ENCODE measurements at regions of chr10 and their contacts with region 1.

Region 1: GRCh38 chr10:97210543-97210961 is 24.8 kb upstream of the SLIT1 start:
- DNase-seq: peak; percentile 77
- ATAC-seq: peak; percentile 77
- H3K4me3 Mint-ChIP-seq: no peak overlapping the region
- H3K27ac Mint-ChIP-seq: no peak overlapping the region
- H3K4me1 Mint-ChIP-seq: no peaks in the 10 kb centered on the region
- H3K27me3 Mint-ChIP-seq: no peaks in the 10 kb centered on the region

Region 2: GRCh38 chr10:97081621-97082235 is 128.8 kb before region 1 on chr10:
- CTCF ChIA-PET with region 1: interaction called, 48 read pairs
- DNase-seq: peak; percentile 70
- ATAC-seq: peak; percentile 78
- H3K4me3 Mint-ChIP-seq: no peak overlapping the region
- H3K27ac Mint-ChIP-seq: no peak overlapping the region
- H3K4me1 Mint-ChIP-seq: no peaks in the 10 kb centered on the region
- H3K27me3 Mint-ChIP-seq: peaks cover 37% of the 10 kb centered on the region

Region 3: GRCh38 chr10:97196223-97197029 is 14.1 kb before region 1 on chr10:
- CTCF ChIA-PET with region 1: interaction called, 147 read pairs
- DNase-seq: peak; percentile 81
- ATAC-seq: peak; percentile 90
- H3K4me3 Mint-ChIP-seq: peak overlapping the region; percentile 56
- H3K27ac Mint-ChIP-seq: no peak overlapping the region
- H3K4me1 Mint-ChIP-seq: peaks cover 17% of the 10 kb centered on the region
- H3K27me3 Mint-ChIP-seq: peaks cover 48% of the 10 kb centered on the region

Region 4: GRCh38 chr10:97234400-97234799 is 23.8 kb after region 1 on chr10:
- CTCF ChIA-PET with region 1: interaction called, 54 read pairs
- DNase-seq: no peak
- ATAC-seq: no peak
- H3K4me3 Mint-ChIP-seq: no peak overlapping the region
- H3K27ac Mint-ChIP-seq: no peak overlapping the region
- H3K4me1 Mint-ChIP-seq: peaks cover 14% of the 10 kb centered on the region
- H3K27me3 Mint-ChIP-seq: no peaks in the 10 kb centered on the region